ENCODE measurements at regions of chr6 and their contacts with region 1.

Region 1: DNA sequence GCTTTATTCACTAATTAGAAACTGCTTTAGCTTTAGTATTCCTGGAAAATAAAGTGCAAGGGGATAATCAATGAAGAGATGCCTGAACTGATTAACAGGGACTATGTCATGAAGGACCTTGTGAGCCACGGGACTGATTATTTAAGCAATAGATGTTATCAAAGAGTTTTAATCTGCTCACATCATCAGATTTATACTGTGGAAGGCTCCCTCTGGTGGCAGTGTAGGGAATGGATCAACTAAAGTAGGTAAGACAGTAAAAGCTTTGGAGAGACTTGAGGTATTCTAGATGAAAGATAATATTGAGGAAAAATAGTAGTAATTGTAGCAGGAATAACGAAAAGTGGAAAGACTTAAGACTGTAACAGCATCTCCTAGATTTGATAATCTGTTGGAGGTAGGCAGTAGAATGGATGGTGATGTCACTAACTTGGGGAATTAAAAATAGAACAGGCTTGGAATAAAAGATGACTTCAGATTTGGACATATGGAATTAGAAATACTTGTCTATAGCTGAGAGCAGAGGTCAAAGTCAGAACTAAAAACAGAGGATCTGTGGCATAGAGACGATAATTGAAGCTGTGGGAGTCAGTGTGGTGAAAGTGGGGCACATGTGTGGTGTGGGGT is 80.3 kb upstream of the HTR1E start:
- DNase-seq: no peak
- H3K4me3 ChIP-seq: no peak overlapping the region
- H3K27ac ChIP-seq: no peak overlapping the region
- H3K4me1 ChIP-seq: no peaks in the 10 kb centered on the region
- H3K27me3 ChIP-seq: peaks cover 0 to 3% (median 0%) of the 10 kb centered on the region in 7 donors
- CTCF ChIP-seq: peak in 8 of 11 experiments; percentile 22 to 64 (median 54)
- POLR2A ChIP-seq: no peak

Region 2: DNA sequence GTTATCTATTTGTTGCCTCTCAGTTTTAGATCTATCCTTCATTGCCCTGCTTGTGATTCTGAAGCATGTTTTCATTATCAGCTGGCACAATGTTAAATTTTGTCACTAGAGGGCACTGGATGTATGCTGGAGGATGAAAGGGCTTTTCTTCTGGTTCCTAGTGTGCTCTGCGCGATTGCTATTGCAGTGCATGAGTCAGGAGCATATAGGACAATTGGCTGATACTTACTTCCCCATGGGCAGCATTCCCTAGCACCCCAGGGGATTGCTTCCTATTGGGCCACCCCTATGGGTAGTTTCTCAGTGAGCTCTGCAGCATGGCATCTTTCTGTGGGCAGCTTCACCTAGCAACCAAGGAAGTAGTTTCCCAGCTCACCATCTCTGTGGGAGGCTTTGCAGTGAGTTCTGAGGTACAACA is 934.0 kb before region 1 on chr6:
- intact Hi-C with region 1: loop called (anchors 5 kb)
- DNase-seq: no peak
- H3K4me3 ChIP-seq: no peak overlapping the region
- H3K27ac ChIP-seq: no peak overlapping the region
- H3K4me1 ChIP-seq: no peaks in the 10 kb centered on the region
- H3K27me3 ChIP-seq: no peaks in the 10 kb centered on the region
- CTCF ChIP-seq: peak in 5 of 11 experiments; percentile 31 to 49 (median 36)
- POLR2A ChIP-seq: no peak